B cell (primary cell): ENCODE measurements at regions of chr9 and their contacts with region 1.

Region 1: GRCh38 chr9:131678499-131679111 is 61.3 kb downstream of the RAPGEF1 start:
- DNase-seq: peak; percentile 76
- ATAC-seq: peak; percentile 87
- H3K4me3 ChIP-seq: peak overlapping the region in 2 of 5 experiments; percentile 1 to 67
- H3K4me3 Mint-ChIP-seq: peak overlapping the region; percentile 99
- H3K27ac ChIP-seq: peak overlapping the region; percentile 88 to 96
- H3K27ac Mint-ChIP-seq: peak overlapping the region; percentile 94
- H3K4me1 ChIP-seq: peaks cover 74 to 79% of the 10 kb centered on the region in 2 donors
- H3K4me1 Mint-ChIP-seq: peaks cover 94% of the 10 kb centered on the region
- H3K27me3 ChIP-seq: no peaks in the 10 kb centered on the region
- H3K27me3 Mint-ChIP-seq: no peaks in the 10 kb centered on the region
- CTCF ChIP-seq: no peak

Region 2: GRCh38 chr9:131627648-131628458 is 50.8 kb before region 1 on chr9:
- CTCF ChIA-PET with region 1: interaction called, 13 read pairs
- POLR2A ChIA-PET with region 1: interaction called, 9 read pairs
- intact Hi-C with region 1: loop called (anchors 5 kb)
- DNase-seq: peak; percentile 84
- ATAC-seq: peak; percentile 79
- H3K4me3 ChIP-seq: no peak overlapping the region
- H3K4me3 Mint-ChIP-seq: peak overlapping the region; percentile 89
- H3K27ac ChIP-seq: peak overlapping the region; percentile 83 to 85
- H3K27ac Mint-ChIP-seq: peak overlapping the region; percentile 94
- H3K4me1 ChIP-seq: peaks cover 24 to 52% of the 10 kb centered on the region in 2 donors
- H3K4me1 Mint-ChIP-seq: peaks cover 65% of the 10 kb centered on the region
- H3K27me3 ChIP-seq: no peaks in the 10 kb centered on the region
- H3K27me3 Mint-ChIP-seq: no peaks in the 10 kb centered on the region
- CTCF ChIP-seq: no peak

Region 3: GRCh38 chr9:131697097-131697496 is 18.5 kb after region 1 on chr9:
- CTCF ChIA-PET with region 1: interaction called, 9 read pairs
- POLR2A ChIA-PET with region 1: interaction called, 10 read pairs
- intact Hi-C with region 1: loop called (anchors 2 kb)
- DNase-seq: no peak
- ATAC-seq: no peak
- H3K4me3 ChIP-seq: no peak overlapping the region
- H3K4me3 Mint-ChIP-seq: peak overlapping the region; percentile 75
- H3K27ac ChIP-seq: peak overlapping the region in 1 of 2 donors; percentile 35
- H3K27ac Mint-ChIP-seq: peak overlapping the region; percentile 21
- H3K4me1 ChIP-seq: peaks cover 72 to 81% of the 10 kb centered on the region in 2 donors
- H3K4me1 Mint-ChIP-seq: peaks cover 94% of the 10 kb centered on the region
- H3K27me3 ChIP-seq: no peaks in the 10 kb centered on the region
- H3K27me3 Mint-ChIP-seq: no peaks in the 10 kb centered on the region
- CTCF ChIP-seq: no peak

Region 4: GRCh38 chr9:131709771-131710454 is 31.3 kb after region 1 on chr9:
- CTCF ChIA-PET with region 1: interaction called, 13 read pairs
- POLR2A ChIA-PET with region 1: interaction called, 4 read pairs
- intact Hi-C with region 1: loop called (anchors 1 kb)
- DNase-seq: peak; percentile 65
- ATAC-seq: peak; percentile 53
- H3K4me3 ChIP-seq: no peak overlapping the region
- H3K4me3 Mint-ChIP-seq: peak overlapping the region; percentile 71
- H3K27ac ChIP-seq: peak overlapping the region; percentile 46 to 59
- H3K27ac Mint-ChIP-seq: peak overlapping the region; percentile 77
- H3K4me1 ChIP-seq: peaks cover 70 to 77% of the 10 kb centered on the region in 2 donors
- H3K4me1 Mint-ChIP-seq: peaks cover 83% of the 10 kb centered on the region
- H3K27me3 ChIP-seq: no peaks in the 10 kb centered on the region
- H3K27me3 Mint-ChIP-seq: no peaks in the 10 kb centered on the region
- CTCF ChIP-seq: no peak

Region 5: DNA sequence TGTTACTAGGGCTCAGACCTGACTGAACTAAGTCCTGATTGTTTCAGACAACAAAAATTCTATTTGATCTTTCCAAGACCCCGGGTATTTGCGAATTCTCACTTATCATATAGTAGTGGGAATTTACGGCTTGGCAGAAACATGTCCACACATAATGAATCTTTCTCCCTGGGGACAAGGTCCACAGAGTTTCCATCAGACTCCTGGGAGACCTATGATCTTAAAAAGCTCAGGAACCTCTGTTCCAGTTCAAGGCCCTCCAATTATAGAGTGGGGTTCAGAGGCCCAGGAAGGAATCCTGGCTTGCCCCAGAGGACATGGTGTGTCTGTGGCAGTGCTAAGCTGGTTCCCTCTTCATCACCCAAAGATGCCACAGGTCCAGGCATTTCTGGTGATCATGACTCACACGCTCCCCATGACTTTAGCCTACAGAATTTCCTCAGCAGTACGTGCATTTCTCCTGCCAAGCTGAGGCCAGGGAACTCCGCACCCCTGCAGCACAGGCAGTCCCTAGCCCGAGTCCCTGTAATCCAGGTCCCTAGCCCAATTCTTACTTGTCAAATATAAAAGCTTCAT is 48.7 kb after region 1 on chr9:
- CTCF ChIA-PET with region 1: interaction called, 146 read pairs
- POLR2A ChIA-PET with region 1: interaction called, 76 read pairs
- intact Hi-C with region 1: loop called (anchors 1 kb)
- DNase-seq: no peak
- ATAC-seq: no peak
- H3K4me3 ChIP-seq: peak overlapping the region in 1 of 5 experiments; percentile 46
- H3K4me3 Mint-ChIP-seq: peak overlapping the region; percentile 89
- H3K27ac ChIP-seq: peak overlapping the region; percentile 99 to 100
- H3K27ac Mint-ChIP-seq: peak overlapping the region; percentile 91
- H3K4me1 ChIP-seq: peaks cover 88 to 97% of the 10 kb centered on the region in 2 donors
- H3K4me1 Mint-ChIP-seq: peaks cover 87% of the 10 kb centered on the region
- H3K27me3 ChIP-seq: no peaks in the 10 kb centered on the region
- H3K27me3 Mint-ChIP-seq: no peaks in the 10 kb centered on the region
- CTCF ChIP-seq: no peak

Region 6: DNA sequence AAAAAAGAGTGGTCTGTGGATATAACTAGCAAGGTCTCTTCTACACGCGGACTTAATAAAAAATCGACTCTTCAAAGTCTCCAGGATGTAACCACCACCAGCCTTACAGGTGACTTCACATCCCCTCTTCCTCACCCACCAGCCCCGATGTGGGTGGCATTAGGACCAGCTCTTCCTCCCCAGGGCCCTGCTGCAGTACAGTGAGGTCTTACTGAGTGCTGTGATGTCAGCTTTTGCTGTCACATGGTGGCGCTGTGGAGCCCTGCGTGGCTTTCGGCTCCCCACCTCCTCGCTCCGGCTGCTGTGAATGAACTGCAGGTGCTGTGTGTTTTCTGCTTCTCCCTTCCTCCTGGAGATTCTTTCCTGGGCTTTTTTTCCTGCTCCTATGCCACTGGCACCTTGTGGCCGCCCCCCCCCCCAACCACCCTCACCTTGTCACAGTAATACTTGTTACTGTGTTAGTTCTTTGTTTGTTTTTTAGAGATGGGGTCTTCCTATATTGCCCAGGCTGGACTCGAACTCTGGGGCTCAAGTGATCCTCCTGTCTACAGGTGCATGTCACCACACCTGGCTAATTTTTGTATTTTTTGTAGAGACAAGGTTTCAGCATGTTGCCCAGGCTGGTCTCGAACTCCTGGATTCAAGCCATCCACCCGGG is 77.1 kb after region 1 on chr9:
- CTCF ChIA-PET with region 1: no interaction called
- POLR2A ChIA-PET with region 1: no interaction called
- intact Hi-C with region 1: no loop called
- DNase-seq: peak; percentile 90
- ATAC-seq: peak; percentile 100
- H3K4me3 ChIP-seq: no peak overlapping the region
- H3K4me3 Mint-ChIP-seq: no peak overlapping the region
- H3K27ac ChIP-seq: no peak overlapping the region
- H3K27ac Mint-ChIP-seq: peak overlapping the region; percentile 70
- H3K4me1 ChIP-seq: peaks cover 6 to 8% of the 10 kb centered on the region in 2 donors
- H3K4me1 Mint-ChIP-seq: peaks cover 8% of the 10 kb centered on the region
- H3K27me3 ChIP-seq: peaks cover 0 to 7% (median 2%) of the 10 kb centered on the region in 4 experiments
- H3K27me3 Mint-ChIP-seq: peaks cover 7% of the 10 kb centered on the region
- CTCF ChIP-seq: peak; percentile 83